Ascending aorta (tissue), 2 donors: ENCODE measurements at regions of chr1 and their contacts with region 1.

Region 1: GRCh38 chr1:234326497-234327366 is 46.5 kb upstream of the COA6 start:
- DNase-seq: no peak
- H3K4me3 ChIP-seq: peak overlapping the region in 1 of 2 donors; percentile 49
- H3K27ac ChIP-seq: no peak overlapping the region
- H3K4me1 ChIP-seq: no peaks in the 10 kb centered on the region
- H3K27me3 ChIP-seq: no peaks in the 10 kb centered on the region
- CTCF ChIP-seq: peak; percentile 48 to 83 (median 73)

Region 2: DNA sequence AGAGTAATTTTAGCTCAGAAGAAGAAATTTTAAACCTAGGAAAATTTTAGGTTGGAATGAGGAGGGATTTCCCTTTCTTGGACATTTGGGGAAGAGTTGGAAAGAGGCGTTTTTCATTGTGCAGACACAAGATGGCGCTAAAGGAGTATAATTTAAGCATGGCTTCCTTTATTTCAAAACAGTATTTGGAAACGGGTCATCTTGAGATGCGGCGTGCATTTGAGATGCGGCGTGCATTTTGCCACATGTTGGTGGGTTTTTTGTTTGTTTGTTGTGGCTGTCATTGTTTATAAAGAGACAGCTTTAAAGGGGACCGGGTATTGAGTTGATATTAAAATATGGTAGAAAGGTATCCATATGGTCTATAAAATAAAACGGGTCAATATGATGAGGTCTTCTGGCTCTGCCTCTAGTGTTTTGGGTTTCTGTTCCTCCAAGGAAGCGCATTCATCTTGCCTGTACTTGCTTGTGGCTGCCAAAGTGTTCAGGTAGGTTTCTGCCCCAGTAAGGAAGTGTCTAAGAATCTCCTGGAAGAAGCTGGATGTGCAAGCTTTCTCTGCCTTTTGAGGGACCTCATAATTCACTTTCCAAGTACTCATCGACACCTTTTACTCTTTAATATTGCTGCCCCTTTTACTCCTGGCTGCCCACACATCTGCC is 212.0 kb before region 1 on chr1:
- intact Hi-C with region 1: loop called (anchors 5 kb)
- DNase-seq: peak in 1 of 2 donors; percentile 66
- H3K4me3 ChIP-seq: peak overlapping the region in 1 of 2 donors; percentile 40
- H3K27ac ChIP-seq: no peak overlapping the region
- H3K4me1 ChIP-seq: no peaks in the 10 kb centered on the region
- H3K27me3 ChIP-seq: no peaks in the 10 kb centered on the region
- CTCF ChIP-seq: peak; percentile 45 to 72 (median 56)

Region 3: GRCh38 chr1:234154320-234155251 is 172.1 kb before region 1 on chr1:
- intact Hi-C with region 1: loop called (anchors 1 kb)
- DNase-seq: no peak
- H3K4me3 ChIP-seq: no peak overlapping the region
- H3K27ac ChIP-seq: no peak overlapping the region
- H3K4me1 ChIP-seq: no peaks in the 10 kb centered on the region
- H3K27me3 ChIP-seq: no peaks in the 10 kb centered on the region
- CTCF ChIP-seq: peak; percentile 40 to 81 (median 72)